ENCODE measurements at regions of chr3 and their contacts with region 1.

Region 1: GRCh38 chr3:49339945-49340800 is at the start of gene USP4:
- DNase-seq: peak; percentile 75
- ATAC-seq: peak; percentile 83
- H3K4me3 Mint-ChIP-seq: peak within 1 kb of the TSS; percentile 88
- H3K27ac Mint-ChIP-seq: peak within 1 kb of the TSS; percentile 90
- H3K4me1 Mint-ChIP-seq: peaks cover 12% of the 10 kb centered on the region
- H3K27me3 Mint-ChIP-seq: no peaks in the 10 kb centered on the region
- CTCF ChIP-seq: no peak
- total RNA-seq, gene USP4: 29.1 to 38.5 TPM (median 36.6 TPM) in 3 replicates

Region 2: DNA sequence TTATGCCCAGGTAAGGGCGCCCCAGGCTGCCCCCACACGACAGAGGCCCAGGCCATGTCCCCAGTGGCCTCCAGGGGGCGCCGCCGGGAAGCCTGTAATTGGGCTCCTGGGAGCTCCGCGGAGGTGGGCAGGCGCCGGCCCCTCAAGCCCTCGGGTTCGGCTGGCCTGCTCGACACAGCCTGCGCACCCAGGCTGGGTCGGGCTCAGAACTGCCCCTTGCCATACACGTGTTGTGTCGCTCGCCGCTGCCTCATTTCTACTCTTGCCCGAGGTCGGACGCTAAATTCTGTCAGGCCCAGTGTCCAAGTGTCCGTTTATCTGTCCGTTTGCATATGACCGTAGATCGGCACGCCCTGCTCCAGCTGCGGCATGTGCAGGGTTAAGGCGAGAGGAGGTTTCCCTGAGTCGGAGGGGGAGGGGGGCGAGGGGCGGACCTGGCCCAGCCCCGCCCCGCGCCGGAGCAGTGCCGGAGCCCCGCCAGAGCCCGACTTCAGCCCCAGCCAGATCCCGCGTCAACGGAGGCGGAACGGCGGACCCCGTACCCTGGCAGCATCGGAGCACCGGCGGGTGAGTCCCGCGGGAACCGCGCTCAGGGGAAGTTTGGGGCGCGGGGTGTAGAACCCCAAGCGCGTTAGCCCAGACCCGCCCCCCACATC is 168.9 kb before region 1 on chr3 and contains the start of gene KLHDC8B:
- CTCF ChIA-PET with region 1: interaction called, 17 read pairs
- POLR2A ChIA-PET with region 1: no interaction called
- DNase-seq: peak; percentile 96
- ATAC-seq: peak; percentile 85
- H3K4me3 Mint-ChIP-seq: peak within 1 kb of the TSS; percentile 82
- H3K27ac Mint-ChIP-seq: peak within 1 kb of the TSS; percentile 64
- H3K4me1 Mint-ChIP-seq: peaks cover 26% of the 10 kb centered on the region
- H3K27me3 Mint-ChIP-seq: peaks cover 20% of the 10 kb centered on the region
- CTCF ChIP-seq: peak; percentile 96
- total RNA-seq, gene KLHDC8B: 13.5 to 21.5 TPM (median 16.1 TPM) in 3 replicates

Region 3: GRCh38 chr3:49255112-49255511 is 85.1 kb before region 1 on chr3:
- CTCF ChIA-PET with region 1: no interaction called
- POLR2A ChIA-PET with region 1: no interaction called
- DNase-seq: no peak
- ATAC-seq: peak; percentile 50; the same call in 1 of the 2 replicates
- H3K4me3 Mint-ChIP-seq: no peak overlapping the region
- H3K27ac Mint-ChIP-seq: no peak overlapping the region
- H3K4me1 Mint-ChIP-seq: no peaks in the 10 kb centered on the region
- H3K27me3 Mint-ChIP-seq: no peaks in the 10 kb centered on the region
- CTCF ChIP-seq: no peak

Region 4: DNA sequence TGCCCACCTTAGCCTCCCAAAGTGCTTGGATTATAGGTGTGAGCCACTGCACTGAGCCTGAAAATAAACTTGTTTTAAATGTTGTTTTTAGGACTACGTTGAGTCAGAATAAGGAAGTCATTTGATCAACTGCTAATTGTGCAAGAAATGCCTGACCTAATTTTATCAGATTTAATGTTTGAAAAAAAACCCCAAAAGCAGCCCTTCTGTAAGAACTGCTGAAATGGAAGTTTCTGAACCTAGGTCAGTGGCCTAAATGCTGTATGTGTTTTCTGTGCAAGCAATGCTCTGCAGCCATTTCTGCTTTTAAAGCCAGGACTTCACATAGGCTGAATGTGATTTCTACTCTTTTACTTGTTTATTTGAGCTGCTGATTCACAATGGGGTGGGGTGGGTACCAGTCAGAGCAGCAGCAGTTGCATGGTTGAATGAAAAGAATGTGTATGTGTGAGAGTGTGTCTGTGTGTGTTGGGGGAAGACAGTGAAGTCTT is 11.4 kb after region 1 on chr3:
- CTCF ChIA-PET with region 1: interaction called, 25 read pairs
- POLR2A ChIA-PET with region 1: interaction called, 5 read pairs
- DNase-seq: no peak
- ATAC-seq: 0 out of 2 replicates have a peak, but pooled peaks have one; percentile 22
- H3K4me3 Mint-ChIP-seq: no peak overlapping the region
- H3K27ac Mint-ChIP-seq: peak overlapping the region; percentile 13
- H3K4me1 Mint-ChIP-seq: peaks cover 9% of the 10 kb centered on the region
- H3K27me3 Mint-ChIP-seq: no peaks in the 10 kb centered on the region; the same call in 1 of the 2 replicates
- CTCF ChIP-seq: no peak

Region 5: DNA sequence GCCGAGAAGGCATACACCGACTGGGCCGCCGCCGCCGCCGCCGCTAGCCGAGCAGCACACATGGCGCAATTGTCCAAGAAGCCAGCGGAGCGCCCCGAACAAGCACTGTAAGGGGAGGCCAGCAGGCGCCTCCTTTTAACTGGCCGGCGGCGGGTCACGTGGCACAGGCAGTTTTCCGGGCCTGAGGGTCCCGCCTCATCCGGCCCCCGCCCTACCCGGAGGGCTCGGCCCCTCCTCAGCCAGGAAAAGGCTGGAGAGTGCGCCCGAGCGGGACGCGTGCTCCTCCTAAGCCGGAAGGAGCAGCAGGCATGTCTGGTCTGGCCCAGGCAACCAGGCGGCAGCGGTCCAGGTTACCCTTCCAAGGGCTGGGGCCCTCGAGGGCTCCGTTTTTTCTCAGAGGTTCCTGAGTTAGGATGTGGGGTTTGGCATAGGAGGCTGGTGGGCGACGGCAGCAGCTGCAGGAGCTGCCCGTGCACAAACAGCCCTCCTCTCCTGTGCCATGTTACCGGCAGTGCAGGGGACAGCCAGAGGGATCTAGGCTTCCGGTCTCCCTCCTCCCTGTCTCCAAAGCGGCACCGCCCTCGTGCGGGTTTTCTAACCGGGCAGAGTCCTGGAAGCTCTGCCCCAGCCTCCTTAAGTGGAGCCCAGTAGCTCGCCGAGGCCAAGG is 18.2 kb after region 1 on chr3 and contains the start of gene GPX1:
- CTCF ChIA-PET with region 1: interaction called, 25 read pairs
- POLR2A ChIA-PET with region 1: interaction called, 15 read pairs
- DNase-seq: peak; percentile 97
- ATAC-seq: peak; percentile 96
- H3K4me3 Mint-ChIP-seq: peak within 1 kb of the TSS; percentile 95
- H3K27ac Mint-ChIP-seq: peak within 1 kb of the TSS; percentile 98
- H3K4me1 Mint-ChIP-seq: peaks cover 23% of the 10 kb centered on the region
- H3K27me3 Mint-ChIP-seq: no peaks in the 10 kb centered on the region; the same call in 1 of the 2 replicates
- CTCF ChIP-seq: no peak
- total RNA-seq, gene GPX1: 305 to 323 TPM (median 321 TPM) in 3 replicates

Region 6: GRCh38 chr3:49411968-49412631 is 71.9 kb after region 1 on chr3 and contains the starts of genes RHOA and TCTA:
- CTCF ChIA-PET with region 1: interaction called, 5 read pairs
- POLR2A ChIA-PET with region 1: interaction called, 16 read pairs
- DNase-seq: peak; percentile 96
- ATAC-seq: peak; percentile 86
- H3K4me3 Mint-ChIP-seq: peak within 1 kb of the TSS; percentile 97
- H3K27ac Mint-ChIP-seq: peak within 1 kb of the TSS; percentile 98
- H3K4me1 Mint-ChIP-seq: peaks cover 41% of the 10 kb centered on the region
- H3K27me3 Mint-ChIP-seq: no peaks in the 10 kb centered on the region
- CTCF ChIP-seq: no peak
- total RNA-seq, gene RHOA: 367 to 398 TPM (median 389 TPM) in 3 replicates
- total RNA-seq, gene TCTA: 10.1 to 11.9 TPM (median 11.5 TPM) in 3 replicates

Region 7: GRCh38 chr3:49469936-49470713 is 130.0 kb after region 1 on chr3 and contains the start of gene DAG1:
- CTCF ChIA-PET with region 1: interaction called, 11 read pairs
- POLR2A ChIA-PET with region 1: interaction called, 11 read pairs
- DNase-seq: peak; percentile 99
- ATAC-seq: peak; percentile 89
- H3K4me3 Mint-ChIP-seq: peak within 1 kb of the TSS; percentile 95
- H3K27ac Mint-ChIP-seq: peak within 1 kb of the TSS; percentile 100
- H3K4me1 Mint-ChIP-seq: peaks cover 27% of the 10 kb centered on the region
- H3K27me3 Mint-ChIP-seq: no peaks in the 10 kb centered on the region
- CTCF ChIP-seq: no peak
- total RNA-seq, gene DAG1: 113 to 119 TPM (median 115 TPM) in 3 replicates

Measured in WTC11 (cell line).